ENCODE measurements at regions of chr2 and their contacts with region 1.

Region 1: GRCh38 chr2:78928502-78928901 is 97.0 kb upstream of the REG3G start:
- DNase-seq: no peak
- H3K4me3 ChIP-seq: no peak overlapping the region
- H3K27ac ChIP-seq: no peak overlapping the region
- H3K4me1 ChIP-seq: no peaks in the 10 kb centered on the region
- H3K27me3 ChIP-seq: no peaks in the 10 kb centered on the region
- CTCF ChIP-seq: no peak

Region 2: DNA sequence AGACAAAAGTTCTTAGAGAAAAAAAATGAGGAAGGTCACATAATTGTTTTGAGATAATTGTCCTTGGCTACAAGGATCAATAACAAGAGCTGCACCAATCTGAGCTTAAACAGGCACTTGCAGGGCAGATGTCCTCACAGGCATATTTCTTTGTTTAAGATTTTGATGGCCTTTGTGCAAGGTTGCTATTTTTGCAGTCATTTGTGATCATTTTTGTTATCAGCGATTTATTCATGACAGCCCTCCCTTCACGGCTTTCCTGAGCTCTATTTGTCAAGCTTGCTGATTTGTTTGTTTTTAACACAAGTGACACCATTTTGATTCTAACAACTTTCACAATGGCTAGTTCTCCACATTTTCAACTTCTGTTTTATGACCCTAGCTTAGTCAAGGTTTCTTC is 321.6 kb before region 1 on chr2:
- intact Hi-C with region 1: no loop called
- DNase-seq: no peak
- H3K4me3 ChIP-seq: no peak overlapping the region
- H3K27ac ChIP-seq: no peak overlapping the region
- H3K4me1 ChIP-seq: no peaks in the 10 kb centered on the region
- H3K27me3 ChIP-seq: no peaks in the 10 kb centered on the region
- CTCF ChIP-seq: no peak

Region 3: GRCh38 chr2:78967294-78967693 is 38.8 kb after region 1 on chr2:
- intact Hi-C with region 1: loop called (anchors 1 kb)
- DNase-seq: no peak
- H3K4me3 ChIP-seq: no peak overlapping the region
- H3K27ac ChIP-seq: no peak overlapping the region
- H3K4me1 ChIP-seq: no peaks in the 10 kb centered on the region
- H3K27me3 ChIP-seq: no peaks in the 10 kb centered on the region
- CTCF ChIP-seq: no peak